ENCODE measurements at regions of chr2 and their contacts with region 1.

Region 1: DNA sequence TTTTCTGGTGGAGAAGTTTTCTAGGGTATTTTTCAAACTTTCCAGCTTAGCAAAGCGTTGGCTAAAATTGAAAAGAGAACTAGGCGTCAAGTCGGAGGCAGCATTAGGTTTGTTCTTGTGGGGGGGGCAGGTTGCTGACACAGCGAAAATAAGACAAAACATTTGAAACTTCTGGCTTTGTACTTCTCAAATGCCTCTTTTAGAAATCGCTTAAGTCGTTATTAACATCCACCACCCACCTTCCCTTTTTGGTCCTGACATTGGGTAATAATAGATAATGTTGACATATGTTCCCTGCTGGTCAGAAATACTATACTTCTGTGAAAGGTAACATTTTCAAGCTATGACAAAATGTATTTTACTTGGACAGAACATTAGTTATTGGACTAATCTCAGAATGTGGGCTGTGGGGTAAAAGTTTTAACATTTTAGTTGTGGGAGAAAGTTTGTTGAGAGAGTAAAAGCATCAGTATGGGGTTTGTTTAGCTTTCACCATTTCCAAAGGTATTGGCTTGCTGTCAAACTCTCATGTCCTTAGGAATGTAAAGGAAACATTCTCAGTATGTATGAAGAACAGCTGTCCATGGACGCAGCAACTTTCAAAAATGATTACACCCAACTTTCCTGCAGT is 88.1 kb upstream of the ZEB2 start:
- DNase-seq: no peak
- ATAC-seq: peak; percentile 32
- H3K4me3 Mint-ChIP-seq: peak overlapping the region; percentile 42
- H3K27ac Mint-ChIP-seq: peak overlapping the region; percentile 65
- H3K4me1 Mint-ChIP-seq: peaks cover 47% of the 10 kb centered on the region
- H3K27me3 Mint-ChIP-seq: no peaks in the 10 kb centered on the region
- CTCF ChIP-seq: no peak

Region 2: GRCh38 chr2:144493027-144493809 is 114.8 kb before region 1 on chr2:
- CTCF ChIA-PET with region 1: no interaction called
- POLR2A ChIA-PET with region 1: no interaction called
- intact Hi-C with region 1: no loop called
- DNase-seq: no peak
- ATAC-seq: peak; percentile 63
- H3K4me3 Mint-ChIP-seq: no peak overlapping the region
- H3K27ac Mint-ChIP-seq: peak overlapping the region; percentile 64
- H3K4me1 Mint-ChIP-seq: peaks cover 87% of the 10 kb centered on the region
- H3K27me3 Mint-ChIP-seq: no peaks in the 10 kb centered on the region
- CTCF ChIP-seq: no peak

Region 3: DNA sequence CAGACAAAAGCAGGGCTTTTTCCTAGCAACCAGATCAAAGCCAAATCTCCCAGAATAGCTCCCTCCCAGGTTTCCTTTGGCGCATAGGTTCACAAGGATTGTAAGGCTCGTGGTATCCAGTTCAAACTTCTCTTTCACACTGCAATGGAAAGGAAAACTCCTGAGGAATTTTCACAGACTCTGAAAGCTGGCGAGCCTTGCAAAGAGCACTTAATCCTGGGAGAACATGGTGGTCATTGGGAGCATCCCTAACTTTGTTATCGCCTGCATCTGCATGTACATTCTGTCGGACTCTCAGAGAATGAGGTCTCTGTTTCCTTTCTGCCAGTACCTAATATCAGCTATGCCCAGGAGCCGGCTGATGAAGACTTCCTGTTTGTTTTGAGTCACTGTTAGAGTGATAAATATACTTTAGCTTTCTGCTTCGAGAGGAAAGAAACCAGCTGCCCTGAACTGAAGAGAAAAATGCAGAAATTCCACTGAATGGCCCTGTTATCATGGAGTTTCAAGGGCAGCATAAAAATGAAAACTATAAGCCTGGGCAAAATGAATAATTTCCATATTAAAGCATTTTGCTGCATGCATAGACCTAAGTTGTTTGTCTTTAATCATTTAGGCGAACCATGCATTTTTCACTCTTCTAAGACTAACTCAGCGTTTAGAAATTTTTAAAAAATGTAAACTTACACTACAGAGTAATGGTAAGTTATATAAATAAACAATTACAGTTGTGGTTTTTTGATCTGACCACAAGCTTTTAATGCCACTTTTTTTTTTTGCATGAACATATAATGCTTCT is 11.7 kb before region 1 on chr2:
- CTCF ChIA-PET with region 1: interaction called, 3 read pairs
- POLR2A ChIA-PET with region 1: interaction called, 7 read pairs
- intact Hi-C with region 1: loop called (anchors 1 kb)
- DNase-seq: no peak
- ATAC-seq: peak; percentile 81
- H3K4me3 Mint-ChIP-seq: peak overlapping the region; percentile 56
- H3K27ac Mint-ChIP-seq: peak overlapping the region; percentile 27
- H3K4me1 Mint-ChIP-seq: peaks cover 35% of the 10 kb centered on the region
- H3K27me3 Mint-ChIP-seq: no peaks in the 10 kb centered on the region
- CTCF ChIP-seq: no peak

Region 4: DNA sequence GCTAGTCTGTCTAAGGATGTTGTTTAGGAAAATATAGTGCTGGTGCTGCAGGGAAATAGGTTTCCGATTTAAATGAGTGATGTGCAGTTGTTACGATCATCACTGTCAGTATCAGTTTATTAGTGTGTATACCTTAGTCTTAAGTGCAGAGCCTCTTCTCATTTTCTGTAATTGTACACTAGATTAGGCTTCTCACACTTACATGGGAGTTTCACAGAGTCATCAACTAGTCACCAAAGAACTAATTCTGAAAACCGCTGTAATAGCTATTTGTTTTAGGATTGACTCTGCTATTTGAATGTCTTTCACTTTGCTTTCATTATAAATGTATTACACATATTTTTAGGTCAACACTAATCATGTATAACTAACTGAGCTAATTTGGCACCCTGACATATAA is 11.8 kb after region 1 on chr2:
- CTCF ChIA-PET with region 1: no interaction called
- POLR2A ChIA-PET with region 1: no interaction called
- intact Hi-C with region 1: no loop called
- DNase-seq: no peak
- ATAC-seq: no peak
- H3K4me3 Mint-ChIP-seq: no peak overlapping the region
- H3K27ac Mint-ChIP-seq: no peak overlapping the region
- H3K4me1 Mint-ChIP-seq: peaks cover 6% of the 10 kb centered on the region
- H3K27me3 Mint-ChIP-seq: no peaks in the 10 kb centered on the region
- CTCF ChIP-seq: no peak

Region 5: GRCh38 chr2:144630459-144631215 is 22.6 kb after region 1 on chr2:
- CTCF ChIA-PET with region 1: no interaction called
- POLR2A ChIA-PET with region 1: interaction called, 5 read pairs
- intact Hi-C with region 1: loop called (anchors 2 kb)
- DNase-seq: no peak
- ATAC-seq: peak; percentile 81
- H3K4me3 Mint-ChIP-seq: no peak overlapping the region
- H3K27ac Mint-ChIP-seq: peak overlapping the region; percentile 9
- H3K4me1 Mint-ChIP-seq: peaks cover 16% of the 10 kb centered on the region
- H3K27me3 Mint-ChIP-seq: no peaks in the 10 kb centered on the region
- CTCF ChIP-seq: no peak

Region 6: DNA sequence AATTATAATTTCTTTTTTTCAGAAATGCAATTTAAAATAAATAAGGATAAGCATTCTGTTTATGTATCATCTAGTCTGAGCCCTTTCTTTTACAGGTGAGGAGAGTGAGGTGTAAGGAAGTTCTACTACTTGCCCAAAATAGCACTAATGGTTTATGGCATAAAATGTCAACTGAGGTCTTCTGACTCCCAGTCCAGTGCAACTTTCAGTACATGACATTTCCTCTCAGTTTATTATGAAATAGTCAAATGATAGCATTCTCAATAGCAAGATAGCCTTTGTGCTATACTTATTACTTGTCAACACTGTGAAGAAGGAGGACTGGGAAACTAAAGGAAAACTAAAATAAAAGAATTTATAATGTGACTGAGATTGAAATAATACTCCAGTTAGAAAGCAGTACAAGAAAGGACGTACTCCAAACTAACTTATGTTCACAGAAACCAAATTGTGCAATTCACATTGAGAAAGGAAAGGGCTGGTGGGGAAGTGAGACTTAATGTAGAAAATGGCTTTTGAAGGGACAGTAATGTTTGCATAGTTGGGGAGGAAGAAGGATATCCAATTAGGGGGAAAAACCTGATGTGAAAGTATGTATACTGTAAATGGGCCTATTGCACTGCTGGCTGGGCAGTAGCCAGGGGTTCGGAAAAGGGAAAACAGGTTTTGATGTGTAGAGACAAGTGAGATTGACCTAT is 78.7 kb after region 1 on chr2:
- CTCF ChIA-PET with region 1: no interaction called
- POLR2A ChIA-PET with region 1: no interaction called
- intact Hi-C with region 1: loop called (anchors 5 kb)
- DNase-seq: no peak
- ATAC-seq: peak; percentile 49
- H3K4me3 Mint-ChIP-seq: no peak overlapping the region
- H3K27ac Mint-ChIP-seq: peak overlapping the region; percentile 1
- H3K4me1 Mint-ChIP-seq: peaks cover 34% of the 10 kb centered on the region
- H3K27me3 Mint-ChIP-seq: no peaks in the 10 kb centered on the region
- CTCF ChIP-seq: no peak

Region 7: GRCh38 chr2:144703852-144704708 is 96.1 kb after region 1 on chr2:
- CTCF ChIA-PET with region 1: no interaction called
- POLR2A ChIA-PET with region 1: no interaction called
- intact Hi-C with region 1: loop called (anchors 5 kb)
- DNase-seq: peak; percentile 27
- ATAC-seq: peak; percentile 81
- H3K4me3 Mint-ChIP-seq: peak overlapping the region; percentile 36
- H3K27ac Mint-ChIP-seq: peak overlapping the region; percentile 73
- H3K4me1 Mint-ChIP-seq: peaks cover 51% of the 10 kb centered on the region
- H3K27me3 Mint-ChIP-seq: no peaks in the 10 kb centered on the region
- CTCF ChIP-seq: no peak

Region 8: GRCh38 chr2:146438246-146438645 is 1830.2 kb after region 1 on chr2:
- CTCF ChIA-PET with region 1: no interaction called
- POLR2A ChIA-PET with region 1: no interaction called
- intact Hi-C with region 1: no loop called
- DNase-seq: no peak
- ATAC-seq: no peak
- H3K4me3 Mint-ChIP-seq: no peak overlapping the region
- H3K27ac Mint-ChIP-seq: no peak overlapping the region
- H3K4me1 Mint-ChIP-seq: no peaks in the 10 kb centered on the region
- H3K27me3 Mint-ChIP-seq: peaks cover 3% of the 10 kb centered on the region
- CTCF ChIP-seq: no peak